Sigmoid colon (tissue), 7 donors: ENCODE measurements at regions of chr15 and their contacts with region 1.

Region 1: GRCh38 chr15:27705056-27705455 is 394.1 kb downstream of the OCA2 start:
- DNase-seq: no peak
- H3K4me3 ChIP-seq: no peak overlapping the region
- H3K27ac ChIP-seq: no peak overlapping the region
- H3K4me1 ChIP-seq: no peaks in the 10 kb centered on the region
- H3K27me3 ChIP-seq: no peaks in the 10 kb centered on the region
- CTCF ChIP-seq: no peak
- EP300 ChIP-seq: no peak
- POLR2A ChIP-seq: no peak

Region 2: GRCh38 chr15:27784107-27784506 is 79.1 kb after region 1 on chr15:
- intact Hi-C with region 1: loop called (anchors 10 kb)
- DNase-seq: no peak
- H3K4me3 ChIP-seq: no peak overlapping the region
- H3K27ac ChIP-seq: no peak overlapping the region
- H3K4me1 ChIP-seq: peaks cover 0 to 29% (median 22%) of the 10 kb centered on the region in 4 donors
- H3K27me3 ChIP-seq: no peaks in the 10 kb centered on the region
- CTCF ChIP-seq: no peak
- EP300 ChIP-seq: no peak
- POLR2A ChIP-seq: no peak